ENCODE measurements at regions of chr2 and their contacts with region 1.

Region 1: DNA sequence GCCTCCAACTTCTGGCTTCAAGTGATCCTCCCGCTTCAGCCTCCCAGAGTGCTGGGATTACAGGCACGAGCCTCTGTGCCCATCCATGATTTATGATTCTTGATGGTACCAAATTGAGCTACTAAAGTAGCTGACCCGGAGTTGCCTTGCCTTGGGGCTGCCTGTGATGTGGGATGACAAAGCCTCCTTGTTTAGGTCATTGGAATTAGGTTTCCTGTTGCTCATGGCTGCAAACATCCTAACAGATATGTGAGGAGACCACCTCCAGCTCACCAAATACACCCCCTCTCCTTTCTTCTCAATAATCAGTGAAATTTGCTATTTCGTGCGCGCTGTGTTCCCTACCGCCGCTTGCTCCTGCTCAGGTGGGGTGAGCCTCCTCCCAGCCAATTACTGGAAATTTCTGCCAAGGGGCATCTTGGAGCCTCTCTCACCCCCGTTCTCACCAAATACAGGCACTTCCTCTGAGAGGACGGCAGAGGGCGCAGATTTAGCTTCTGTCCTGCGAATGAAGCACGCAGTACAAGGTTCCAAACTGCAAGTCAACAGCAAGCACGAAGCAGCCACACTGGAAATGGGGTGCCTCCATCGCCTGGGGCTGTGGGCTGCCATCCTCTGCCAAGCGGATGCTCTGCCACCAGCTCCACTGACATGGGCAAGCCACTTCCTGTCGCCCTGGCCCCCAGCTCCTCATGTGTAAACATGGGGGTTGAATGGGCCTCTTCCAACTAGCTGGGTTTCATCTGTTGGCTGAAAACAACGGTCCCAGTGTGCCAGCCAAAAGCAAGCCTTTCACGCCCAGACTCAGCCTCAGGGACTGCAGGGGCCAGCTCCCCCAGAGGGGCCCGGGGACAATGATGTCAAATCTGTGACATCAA is 71.7 kb downstream of the NCAPH start:
- DNase-seq: peak; percentile 88
- CTCF ChIP-seq: peak; percentile 86

Region 2: DNA sequence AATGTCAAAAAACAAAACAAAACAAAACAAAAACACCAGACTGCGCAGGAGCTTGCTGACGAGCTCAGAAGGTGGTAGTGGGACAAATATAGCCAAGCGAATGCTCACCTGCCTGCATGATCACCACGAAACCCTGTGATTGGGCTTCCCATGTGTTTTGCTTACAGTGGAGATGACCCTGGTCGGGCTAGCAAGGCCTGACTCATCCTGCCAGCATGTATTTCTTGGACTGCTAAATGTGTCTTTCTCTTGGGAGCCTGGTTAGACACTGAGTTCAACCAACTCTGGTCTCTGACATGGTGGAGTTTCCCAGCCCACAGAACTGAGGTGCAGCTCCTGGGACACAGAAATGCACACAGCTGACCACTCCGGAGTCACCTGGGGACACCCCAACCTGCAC is 231.3 kb before region 1 on chr2:
- in situ Hi-C with region 1: no loop called
- DNase-seq: peak; percentile 23
- CTCF ChIP-seq: no peak

Region 3: GRCh38 chr2:96514521-96514920 is 107.2 kb after region 1 on chr2:
- in situ Hi-C with region 1: loop called (anchors 10 kb)
- DNase-seq: no peak
- CTCF ChIP-seq: no peak

Region 4: DNA sequence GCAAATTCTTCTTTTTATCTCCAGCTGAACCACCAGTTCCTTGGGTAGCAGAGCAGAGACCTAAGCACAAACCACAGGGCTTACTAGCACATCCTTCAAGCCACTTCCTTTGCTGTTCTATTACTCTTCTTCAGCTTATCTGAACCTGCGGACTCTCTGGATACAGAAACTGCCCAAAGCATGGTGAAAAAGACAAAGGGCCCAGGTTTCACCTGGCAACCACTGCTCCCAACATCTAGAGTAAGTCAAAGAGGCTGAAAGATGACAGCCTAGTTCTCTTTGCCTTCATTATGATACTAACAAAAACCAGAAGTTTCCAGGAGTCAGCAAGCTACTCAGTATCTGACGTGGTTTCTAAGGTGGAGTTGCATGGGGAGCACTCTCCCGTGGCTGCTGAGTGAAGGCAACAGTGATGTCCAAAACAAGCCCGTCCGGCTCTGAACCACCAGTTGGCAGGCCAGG is 187.4 kb after region 1 on chr2:
- in situ Hi-C with region 1: no loop called
- DNase-seq: no peak
- CTCF ChIP-seq: no peak

Region 5: GRCh38 chr2:96730212-96730611 is 322.9 kb after region 1 on chr2:
- in situ Hi-C with region 1: no loop called
- DNase-seq: no peak
- CTCF ChIP-seq: no peak